Activated CD8-positive, alpha-beta T cell treated with anti-CD3 and anti-CD28 coated beads for 36 hours (primary cell): ENCODE measurements at regions of chr6 and their contacts with region 1.

Region 1: DNA sequence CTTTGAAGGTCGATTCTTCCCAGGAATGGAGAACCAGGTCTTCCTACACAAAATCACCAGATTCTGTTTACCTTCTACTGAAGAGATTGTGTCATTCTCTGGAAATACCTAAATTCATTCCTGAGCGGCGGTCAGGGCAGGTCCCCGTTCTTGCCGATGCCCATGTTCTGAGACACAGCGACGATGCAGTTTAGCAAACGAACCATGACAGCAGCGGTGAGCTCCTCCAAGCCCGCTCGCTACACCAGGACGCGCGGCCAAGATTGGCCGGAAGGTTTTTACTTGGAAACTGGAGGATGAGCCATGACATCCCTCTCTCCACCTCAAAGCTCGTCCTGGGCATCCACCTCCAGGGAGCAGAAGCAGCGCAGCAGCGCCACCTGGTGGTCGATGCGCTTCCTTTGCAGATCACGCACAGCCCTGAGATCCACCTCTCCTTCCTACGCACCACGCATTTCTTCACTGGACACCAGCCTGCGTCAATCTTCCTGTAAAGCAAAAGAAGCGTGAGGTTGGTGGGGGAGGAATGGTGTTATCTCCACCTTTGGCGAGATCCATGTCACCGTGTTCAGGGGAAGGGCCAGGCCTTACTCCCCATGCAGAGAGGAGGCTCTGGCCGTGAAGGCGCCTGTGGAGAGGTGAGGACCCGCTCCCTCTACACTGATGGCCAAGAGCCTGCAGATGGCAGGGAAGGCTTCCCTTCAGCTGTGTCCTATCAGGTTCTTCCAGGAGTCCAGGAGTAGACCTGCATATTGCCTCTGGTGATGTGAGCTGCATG is 9.9 kb upstream of the HLA-B start:
- DNase-seq: peak; percentile 88
- ATAC-seq: peak; percentile 96
- H3K4me3 Mint-ChIP-seq: peak overlapping the region; percentile 77
- H3K27ac Mint-ChIP-seq: no peak overlapping the region
- H3K4me1 Mint-ChIP-seq: peaks cover 17% of the 10 kb centered on the region
- H3K27me3 Mint-ChIP-seq: peaks cover 18% of the 10 kb centered on the region
- CTCF ChIP-seq: peak; percentile 97

Region 2: DNA sequence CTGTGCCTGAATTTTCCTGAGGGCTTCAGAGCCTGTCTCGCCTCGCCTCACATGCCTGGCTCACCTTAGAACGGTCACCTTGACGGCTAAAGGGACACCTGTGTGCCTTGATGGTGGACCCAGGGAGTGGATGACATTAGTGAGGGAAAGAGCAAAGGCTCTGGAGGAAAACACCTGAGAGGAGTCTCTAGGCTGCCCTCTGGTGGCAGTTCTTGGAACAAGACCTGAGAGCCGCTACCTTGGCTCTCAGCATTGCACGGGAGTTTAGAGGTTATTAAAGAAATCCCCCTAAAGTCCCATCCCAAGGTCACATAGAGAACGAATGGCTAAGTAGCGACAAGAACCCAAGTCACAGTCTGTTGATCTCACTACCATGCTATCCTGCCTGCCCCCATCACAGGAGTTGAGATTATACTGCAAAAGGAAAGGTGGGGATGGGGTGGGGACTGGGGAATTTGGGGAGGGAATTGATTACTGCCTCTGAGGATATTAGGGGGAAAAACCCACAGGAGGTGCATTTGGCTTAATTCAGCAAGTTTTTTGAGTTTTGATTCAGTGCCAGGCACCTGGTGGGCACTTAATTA is 238.7 kb before region 1 on chr6:
- CTCF ChIA-PET with region 1: interaction called, 11 read pairs
- POLR2A ChIA-PET with region 1: no interaction called
- intact Hi-C with region 1: no loop called
- DNase-seq: peak; percentile 88
- ATAC-seq: peak; percentile 91
- H3K4me3 Mint-ChIP-seq: no peak overlapping the region
- H3K27ac Mint-ChIP-seq: no peak overlapping the region
- H3K4me1 Mint-ChIP-seq: peaks cover 2% of the 10 kb centered on the region
- H3K27me3 Mint-ChIP-seq: peaks cover 2% of the 10 kb centered on the region
- CTCF ChIP-seq: peak; percentile 73

Region 3: GRCh38 chr6:31158140-31158862 is 208.6 kb before region 1 on chr6 and contains the start of gene TCF19:
- CTCF ChIA-PET with region 1: interaction called, 15 read pairs
- POLR2A ChIA-PET with region 1: no interaction called
- intact Hi-C with region 1: no loop called
- DNase-seq: peak; percentile 99
- ATAC-seq: peak; percentile 88
- H3K4me3 Mint-ChIP-seq: peak within 1 kb of the TSS; percentile 97
- H3K27ac Mint-ChIP-seq: peak within 1 kb of the TSS; percentile 89
- H3K4me1 Mint-ChIP-seq: peaks cover 24% of the 10 kb centered on the region
- H3K27me3 Mint-ChIP-seq: no peaks in the 10 kb centered on the region
- CTCF ChIP-seq: no peak
- total RNA-seq, gene TCF19: 91.9 to 92.9 TPM

Region 4: GRCh38 chr6:31203345-31203979 is 163.4 kb before region 1 on chr6:
- CTCF ChIA-PET with region 1: interaction called, 38 read pairs
- POLR2A ChIA-PET with region 1: no interaction called
- intact Hi-C with region 1: no loop called
- DNase-seq: peak; percentile 73
- ATAC-seq: peak; percentile 74
- H3K4me3 Mint-ChIP-seq: peak overlapping the region; percentile 85
- H3K27ac Mint-ChIP-seq: peak overlapping the region; percentile 97
- H3K4me1 Mint-ChIP-seq: peaks cover 59% of the 10 kb centered on the region
- H3K27me3 Mint-ChIP-seq: no peaks in the 10 kb centered on the region
- CTCF ChIP-seq: no peak

Region 5: DNA sequence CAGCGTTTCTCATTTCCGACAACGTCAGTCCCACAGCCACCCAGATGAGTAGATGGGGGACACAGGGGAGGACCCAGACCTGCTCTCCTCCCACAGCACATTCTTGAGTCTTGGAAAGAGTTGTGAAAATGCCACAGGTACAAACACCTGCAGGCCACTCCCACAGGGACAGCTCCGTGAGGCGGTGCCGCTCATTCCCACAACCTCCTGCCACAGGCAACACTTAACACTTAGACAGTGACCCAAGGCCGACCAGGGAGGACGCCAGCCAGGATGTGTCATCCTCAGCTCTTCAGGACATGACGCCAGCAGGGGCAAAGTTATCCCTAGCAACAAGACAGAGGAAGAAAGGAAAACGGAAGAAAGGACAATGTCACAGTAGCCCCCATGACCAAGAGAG is 13.0 kb after region 1 on chr6:
- CTCF ChIA-PET with region 1: interaction called, 36 read pairs
- POLR2A ChIA-PET with region 1: interaction called, 3 read pairs
- intact Hi-C with region 1: no loop called
- DNase-seq: no peak
- ATAC-seq: no peak
- H3K4me3 Mint-ChIP-seq: no peak overlapping the region
- H3K27ac Mint-ChIP-seq: no peak overlapping the region
- H3K4me1 Mint-ChIP-seq: peaks cover 2% of the 10 kb centered on the region
- H3K27me3 Mint-ChIP-seq: peaks cover 9% of the 10 kb centered on the region
- CTCF ChIP-seq: no peak